Endothelial cell of umbilical vein (primary cell): ENCODE measurements at regions of chr9 and their contacts with region 1.

Region 1: DNA sequence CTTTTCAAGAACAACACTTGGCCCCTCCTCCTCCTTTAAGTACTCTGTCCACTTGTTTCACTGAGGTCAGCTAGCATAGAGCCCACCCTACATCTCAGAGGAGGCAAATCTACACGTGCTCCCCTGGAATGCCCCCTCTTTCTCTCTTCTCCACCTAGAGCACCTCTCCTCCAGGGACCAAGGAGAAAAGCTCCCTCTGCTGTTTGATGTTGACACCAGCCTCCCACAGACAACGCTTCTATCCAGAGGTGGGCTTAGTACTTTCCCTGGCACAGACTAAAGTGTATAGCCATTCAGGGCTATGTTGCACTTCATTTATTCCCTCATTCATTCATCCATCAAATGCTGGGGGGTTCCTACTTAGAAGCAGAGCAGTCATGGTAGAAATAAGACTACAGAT is 68.2 kb upstream of the TAF1L start:
- DNase-seq: peak; percentile 9
- H3K4me3 ChIP-seq: no peak overlapping the region
- H3K27ac ChIP-seq: no peak overlapping the region
- H3K4me1 ChIP-seq: no peaks in the 10 kb centered on the region
- H3K27me3 ChIP-seq: no peaks in the 10 kb centered on the region
- CTCF ChIP-seq: peak in 1 of 2 donors; percentile 31
- POLR2A ChIP-seq: no peak

Region 2: GRCh38 chr9:32589083-32589723 is 114.4 kb before region 1 on chr9:
- CTCF ChIA-PET with region 1: interaction called, 40 read pairs
- POLR2A ChIA-PET with region 1: no interaction called
- dilution Hi-C with region 1: no loop called
- intact Hi-C with region 1: loop called (anchors 10 kb)
- DNase-seq: peak; percentile 66
- H3K4me3 ChIP-seq: no peak overlapping the region
- H3K27ac ChIP-seq: no peak overlapping the region
- H3K4me1 ChIP-seq: no peaks in the 10 kb centered on the region
- H3K27me3 ChIP-seq: peaks cover 4 to 18% of the 10 kb centered on the region in 2 experiments
- CTCF ChIP-seq: peak; percentile 12 to 45
- POLR2A ChIP-seq: no peak